Tibial artery (tissue), 4 donors: ENCODE measurements at regions of chr1 and their contacts with region 1.

Region 1: DNA sequence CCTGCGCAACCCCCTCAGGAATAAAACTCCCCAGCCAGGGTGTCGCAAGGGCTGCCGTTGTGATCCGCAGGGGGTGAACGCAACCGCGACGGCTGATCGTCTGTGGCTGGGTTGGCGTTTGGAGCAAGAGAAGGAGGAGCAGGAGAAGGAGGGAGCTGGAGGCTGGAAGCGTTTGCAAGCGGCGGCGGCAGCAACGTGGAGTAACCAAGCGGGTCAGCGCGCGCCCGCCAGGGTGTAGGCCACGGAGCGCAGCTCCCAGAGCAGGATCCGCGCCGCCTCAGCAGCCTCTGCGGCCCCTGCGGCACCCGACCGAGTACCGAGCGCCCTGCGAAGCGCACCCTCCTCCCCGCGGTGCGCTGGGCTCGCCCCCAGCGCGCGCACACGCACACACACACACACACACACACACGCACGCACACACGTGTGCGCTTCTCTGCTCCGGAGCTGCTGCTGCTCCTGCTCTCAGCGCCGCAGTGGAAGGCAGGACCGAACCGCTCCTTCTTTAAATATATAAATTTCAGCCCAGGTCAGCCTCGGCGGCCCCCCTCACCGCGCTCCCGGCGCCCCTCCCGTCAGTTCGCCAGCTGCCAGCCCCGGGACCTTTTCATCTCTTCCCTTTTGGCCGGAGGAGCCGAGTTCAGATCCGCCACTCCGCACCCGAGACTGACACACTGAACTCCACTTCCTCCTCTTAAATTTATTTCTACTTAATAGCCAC is 696 bp downstream of the TGFB2 start:
- DNase-seq: peak; percentile 72 to 85
- H3K4me3 ChIP-seq: peak overlapping the region; percentile 70 to 75
- H3K27ac ChIP-seq: peak overlapping the region; percentile 94
- H3K4me1 ChIP-seq: peaks cover 0 to 35% (median 15%) of the 10 kb centered on the region in 4 donors
- H3K27me3 ChIP-seq: no peaks in the 10 kb centered on the region
- CTCF ChIP-seq: peak in 1 of 2 experiments; percentile 16

Region 2: DNA sequence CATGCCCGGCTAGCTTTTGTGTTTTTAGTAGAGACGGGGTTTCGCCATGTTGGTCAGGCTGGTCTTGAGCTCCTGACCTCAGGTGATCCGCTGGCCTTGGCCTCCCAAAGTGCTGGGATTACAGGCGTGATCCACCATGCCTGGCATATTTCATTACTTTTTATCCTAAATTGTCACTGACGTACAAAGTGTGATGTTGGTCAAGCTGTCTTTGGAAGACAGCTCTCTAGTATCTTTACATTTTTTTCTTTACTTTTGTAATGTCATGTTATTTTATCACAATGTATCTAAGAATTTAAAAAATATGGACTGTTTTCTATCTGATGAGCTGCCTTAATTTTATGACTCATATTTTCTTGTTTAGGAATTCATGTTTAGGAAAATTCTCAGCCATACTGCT is 642.5 kb before region 1 on chr1:
- intact Hi-C with region 1: no loop called
- DNase-seq: no peak
- H3K4me3 ChIP-seq: no peak overlapping the region
- H3K27ac ChIP-seq: no peak overlapping the region
- H3K4me1 ChIP-seq: no peaks in the 10 kb centered on the region
- H3K27me3 ChIP-seq: no peaks in the 10 kb centered on the region
- CTCF ChIP-seq: no peak

Region 3: GRCh38 chr1:218459878-218460711 is 114.3 kb after region 1 on chr1:
- intact Hi-C with region 1: loop called (anchors 5 kb)
- DNase-seq: peak; percentile 39 to 70
- H3K4me3 ChIP-seq: peak overlapping the region in 1 of 2 donors; percentile 15
- H3K27ac ChIP-seq: peak overlapping the region; percentile 68 to 84
- H3K4me1 ChIP-seq: peaks cover 0 to 59% (median 38%) of the 10 kb centered on the region in 4 donors
- H3K27me3 ChIP-seq: no peaks in the 10 kb centered on the region
- CTCF ChIP-seq: no peak

Region 4: DNA sequence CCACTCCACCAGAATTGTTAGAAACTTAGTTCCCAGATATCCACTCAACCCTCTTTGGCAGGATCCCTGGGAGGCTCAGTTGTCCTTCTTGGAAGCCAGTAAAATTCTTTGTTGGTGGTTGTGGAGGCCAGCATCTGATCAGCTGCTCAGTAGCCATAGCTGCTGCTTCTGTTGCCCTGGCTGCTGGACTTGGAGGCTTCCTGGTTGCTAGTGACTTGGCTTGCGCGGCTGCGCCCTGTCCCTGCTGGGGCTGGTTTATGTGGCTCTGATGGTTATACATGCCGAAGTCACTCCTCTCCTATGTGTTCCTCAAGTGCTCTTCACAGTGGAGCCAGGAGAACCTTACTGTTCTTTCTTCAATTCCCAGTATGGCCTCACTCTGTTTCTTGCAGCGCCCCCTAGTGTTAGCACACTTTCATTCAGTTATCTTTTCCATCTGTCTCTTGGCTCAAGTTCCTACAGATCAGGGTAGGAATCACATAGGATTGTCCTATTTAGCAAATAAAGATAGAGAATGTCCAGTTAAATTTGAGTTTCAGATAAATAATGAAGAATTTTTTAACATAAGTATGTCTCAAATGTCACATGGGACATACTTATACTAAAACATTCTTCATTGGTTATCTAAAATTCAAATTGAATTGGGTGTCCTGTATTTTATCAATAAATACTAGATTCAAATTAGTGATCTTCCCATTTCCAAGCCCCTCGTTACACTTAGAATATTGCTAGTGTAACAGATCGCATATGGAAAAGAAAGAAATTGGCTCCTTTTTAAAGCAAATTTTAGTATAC is 175.7 kb after region 1 on chr1:
- intact Hi-C with region 1: loop called (anchors 10 kb)
- DNase-seq: peak; percentile 54 to 70
- H3K4me3 ChIP-seq: no peak overlapping the region
- H3K27ac ChIP-seq: no peak overlapping the region
- H3K4me1 ChIP-seq: no peaks in the 10 kb centered on the region
- H3K27me3 ChIP-seq: no peaks in the 10 kb centered on the region
- CTCF ChIP-seq: peak; percentile 64 to 74

Region 5: DNA sequence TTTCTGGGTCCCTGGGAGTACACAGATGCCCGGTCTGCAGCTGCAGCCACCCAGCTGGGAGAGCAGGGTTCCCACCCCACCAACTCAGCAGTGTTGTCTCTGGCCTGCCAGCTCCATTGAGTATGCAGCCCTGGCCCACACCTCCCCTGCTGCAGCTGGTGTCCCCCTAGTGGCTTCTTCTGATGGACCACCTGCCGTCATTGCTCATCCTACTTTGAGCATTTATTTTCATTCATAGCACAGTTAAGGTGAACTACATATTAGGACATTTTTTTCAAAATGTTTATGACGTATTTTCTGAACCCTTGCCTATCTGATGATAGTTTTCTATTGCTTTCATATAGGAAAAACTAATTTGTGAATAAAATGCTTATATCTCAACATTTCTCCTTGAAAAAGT is 638.1 kb after region 1 on chr1:
- intact Hi-C with region 1: loop called (anchors 10 kb)
- DNase-seq: no peak
- H3K4me3 ChIP-seq: no peak overlapping the region
- H3K27ac ChIP-seq: no peak overlapping the region
- H3K4me1 ChIP-seq: peaks cover 0 to 20% (median 11%) of the 10 kb centered on the region in 4 donors
- H3K27me3 ChIP-seq: no peaks in the 10 kb centered on the region
- CTCF ChIP-seq: no peak